ENCODE measurements at regions of chr2 and their contacts with region 1.

Region 1: GRCh38 chr2:12716282-12717190 is at the start of gene TRIB2:
- DNase-seq: no peak
- H3K4me3 ChIP-seq: peak within 1 kb of the TSS; percentile 73 to 75
- H3K27ac ChIP-seq: peak within 1 kb of the TSS; percentile 81
- H3K4me1 ChIP-seq: peaks cover 36% of the 10 kb centered on the region
- H3K27me3 ChIP-seq: no peaks in the 10 kb centered on the region
- CTCF ChIP-seq: no peak
- POLR2A ChIP-seq: peak in 1 of 2 donors; percentile 41
- total RNA-seq, gene TRIB2: 64.8 TPM

Region 2: GRCh38 chr2:11863513-11864328 is 852.8 kb before region 1 on chr2:
- intact Hi-C with region 1: loop called (anchors 10 kb)
- DNase-seq: peak in 1 of 2 donors; percentile 95
- H3K4me3 ChIP-seq: peak overlapping the region in 1 of 2 donors; percentile 7
- H3K27ac ChIP-seq: peak overlapping the region; percentile 46
- H3K4me1 ChIP-seq: peaks cover 10% of the 10 kb centered on the region
- H3K27me3 ChIP-seq: no peaks in the 10 kb centered on the region
- CTCF ChIP-seq: peak; percentile 49 to 98 (median 95)
- POLR2A ChIP-seq: no peak

Region 3: GRCh38 chr2:11930211-11930761 is 786.2 kb before region 1 on chr2:
- intact Hi-C with region 1: no loop called
- DNase-seq: no peak
- H3K4me3 ChIP-seq: no peak overlapping the region
- H3K27ac ChIP-seq: no peak overlapping the region
- H3K4me1 ChIP-seq: no peaks in the 10 kb centered on the region
- H3K27me3 ChIP-seq: no peaks in the 10 kb centered on the region
- CTCF ChIP-seq: no peak
- POLR2A ChIP-seq: no peak

Region 4: DNA sequence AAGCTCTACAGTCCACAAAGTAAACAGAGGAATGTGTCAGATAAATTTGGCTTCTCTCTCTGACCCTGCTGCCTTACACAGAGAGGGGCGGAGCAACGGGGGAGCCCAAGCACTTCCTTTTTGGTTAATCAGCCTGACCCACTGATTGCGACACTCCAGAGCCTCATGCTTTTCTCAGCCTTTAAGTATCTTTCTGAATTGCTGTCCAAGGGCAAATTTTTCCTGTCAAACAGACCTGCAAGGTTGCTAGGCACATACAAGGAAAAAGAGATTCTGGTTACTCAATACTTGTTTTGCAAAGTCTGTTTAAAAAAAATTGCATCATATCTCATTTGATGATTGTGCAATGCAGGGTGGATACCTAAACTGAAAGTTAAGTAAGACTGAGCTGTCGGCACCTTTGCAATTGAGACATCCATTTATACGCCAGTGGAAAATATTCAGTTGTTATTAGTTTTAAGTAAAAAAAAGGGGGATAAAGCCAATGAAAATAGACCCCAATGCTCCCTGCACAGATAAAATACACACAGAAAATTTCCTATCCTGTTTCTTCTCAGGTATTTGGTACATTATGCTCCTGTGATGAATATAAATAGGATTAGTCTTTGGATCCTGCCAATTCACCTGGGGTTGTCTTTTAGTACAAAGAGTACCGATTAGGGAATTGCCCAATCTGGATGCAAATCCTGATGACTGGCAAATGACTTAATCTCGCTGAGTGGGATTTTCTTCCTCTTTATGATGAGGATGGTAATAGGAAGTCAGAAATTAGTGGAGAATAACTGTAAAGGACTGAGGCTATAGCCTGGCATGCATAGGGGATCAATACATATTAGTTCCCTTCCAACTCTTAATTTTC is 260.0 kb before region 1 on chr2:
- intact Hi-C with region 1: loop called (anchors 5 kb)
- DNase-seq: peak in 1 of 2 donors; percentile 98
- H3K4me3 ChIP-seq: peak overlapping the region in 1 of 2 donors; percentile 16
- H3K27ac ChIP-seq: peak overlapping the region; percentile 54
- H3K4me1 ChIP-seq: peaks cover 25% of the 10 kb centered on the region
- H3K27me3 ChIP-seq: no peaks in the 10 kb centered on the region
- CTCF ChIP-seq: no peak
- POLR2A ChIP-seq: no peak

Region 5: DNA sequence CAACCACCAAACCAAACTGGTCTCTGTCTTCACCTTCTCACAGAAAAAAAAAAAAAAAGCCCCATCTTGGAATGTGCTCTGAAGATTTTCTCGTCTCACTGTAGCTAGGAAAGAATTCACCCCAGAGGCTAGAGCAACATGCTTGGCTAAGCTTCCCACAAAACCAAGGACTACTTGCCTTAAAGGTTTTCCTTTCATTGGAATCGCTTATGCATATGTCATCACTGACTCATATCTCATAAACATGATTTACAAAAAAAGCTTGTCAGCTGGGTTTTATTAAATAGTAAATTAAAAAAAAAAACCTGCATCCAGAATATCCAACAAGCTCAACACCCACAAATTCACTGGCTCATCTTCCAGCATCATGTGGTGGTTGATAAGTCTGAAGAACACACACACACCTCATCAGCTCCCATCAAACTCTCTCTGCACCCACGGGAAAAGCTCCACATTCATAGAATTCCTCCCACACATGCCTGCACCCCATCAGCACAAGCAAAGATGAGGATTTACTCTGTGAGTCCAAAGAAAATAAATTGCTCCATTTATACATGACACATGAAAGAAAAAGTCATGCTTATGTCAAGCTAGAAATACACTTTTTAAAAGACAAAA is 181.8 kb before region 1 on chr2:
- intact Hi-C with region 1: loop called (anchors 5 kb)
- DNase-seq: no peak
- H3K4me3 ChIP-seq: no peak overlapping the region
- H3K27ac ChIP-seq: no peak overlapping the region
- H3K4me1 ChIP-seq: peaks cover 14% of the 10 kb centered on the region
- H3K27me3 ChIP-seq: no peaks in the 10 kb centered on the region
- CTCF ChIP-seq: no peak
- POLR2A ChIP-seq: no peak

Region 6: DNA sequence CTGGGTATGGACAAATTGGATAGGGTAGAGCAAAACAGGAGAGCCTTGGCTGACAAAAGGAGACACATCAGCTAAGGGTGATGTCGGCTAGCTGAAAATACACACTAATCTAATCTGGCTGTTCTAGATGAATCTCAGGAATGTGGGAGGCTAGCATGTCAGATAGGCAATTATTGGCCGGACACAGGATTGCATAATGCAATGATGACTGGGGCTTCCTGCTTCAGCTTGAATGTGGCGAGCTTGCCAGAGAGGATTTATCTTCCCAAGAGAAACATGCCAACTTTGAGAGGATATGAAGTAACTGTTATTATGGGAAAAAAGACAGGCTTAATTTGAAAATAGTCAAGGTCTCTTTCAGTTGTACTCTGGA is 102.6 kb after region 1 on chr2:
- intact Hi-C with region 1: loop called (anchors 5 kb)
- DNase-seq: peak in 1 of 2 donors; percentile 97
- H3K4me3 ChIP-seq: no peak overlapping the region
- H3K27ac ChIP-seq: peak overlapping the region; percentile 60
- H3K4me1 ChIP-seq: peaks cover 15% of the 10 kb centered on the region
- H3K27me3 ChIP-seq: no peaks in the 10 kb centered on the region
- CTCF ChIP-seq: no peak
- POLR2A ChIP-seq: no peak

Region 7: DNA sequence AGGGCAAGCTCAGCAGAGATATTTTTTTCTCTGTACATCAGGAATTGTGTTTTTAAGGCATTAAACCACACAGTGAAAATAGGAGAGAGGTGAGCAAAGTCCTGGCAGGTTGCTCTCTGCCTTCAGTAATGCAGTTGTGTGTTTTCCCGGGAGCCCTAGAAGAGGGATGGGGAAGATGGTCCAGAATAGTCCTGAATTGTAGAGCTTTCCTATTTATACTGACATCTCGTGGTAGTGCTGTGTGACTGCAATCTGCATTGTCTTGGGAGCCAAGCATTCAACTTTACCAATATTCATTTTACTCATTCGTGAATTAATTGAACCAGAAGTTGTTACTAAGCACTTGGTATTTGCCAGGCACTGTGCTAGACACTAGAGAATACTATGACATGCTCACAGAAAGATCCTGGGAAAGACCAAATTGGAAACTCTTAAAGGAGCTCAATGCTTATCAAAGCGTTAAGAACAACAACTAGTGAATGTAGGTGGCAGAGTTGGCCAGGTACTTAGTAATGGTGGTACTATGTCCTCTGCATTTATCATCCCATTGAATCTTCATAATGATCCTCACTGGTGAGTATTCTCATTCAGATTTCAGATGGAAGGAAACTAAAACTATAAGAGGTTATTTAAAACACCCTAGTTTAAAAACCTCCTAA is 214.8 kb after region 1 on chr2:
- intact Hi-C with region 1: loop called (anchors 5 kb)
- DNase-seq: no peak
- H3K4me3 ChIP-seq: no peak overlapping the region
- H3K27ac ChIP-seq: no peak overlapping the region
- H3K4me1 ChIP-seq: peaks cover 25% of the 10 kb centered on the region
- H3K27me3 ChIP-seq: no peaks in the 10 kb centered on the region
- CTCF ChIP-seq: peak; percentile 50 to 89 (median 88)
- POLR2A ChIP-seq: no peak

Measured in vagina (tissue), 2 donors.